Heart right ventricle (tissue), 16 donors: ENCODE measurements at regions of chr9 and their contacts with region 1.

Region 1: GRCh38 chr9:69131682-69132081 is 42.4 kb upstream of the TJP2 start:
- DNase-seq: peak in 1 of 2 donors; percentile 3
- ATAC-seq: peak; percentile 28 to 79 (median 40)
- H3K4me3 ChIP-seq: no peak overlapping the region
- H3K27ac ChIP-seq: peak overlapping the region in 9 of 10 donors; percentile 39 to 88 (median 76)
- H3K4me1 ChIP-seq: peaks cover 11 to 68% (median 35%) of the 10 kb centered on the region in 9 donors
- H3K27me3 ChIP-seq: no peaks in the 10 kb centered on the region
- CTCF ChIP-seq: no peak

Region 2: GRCh38 chr9:69078581-69078980 is 53.1 kb before region 1 on chr9:
- intact Hi-C with region 1: loop called in 2 of 10 experiments (anchors 5 to 10 kb)
- DNase-seq: peak in 1 of 2 donors; percentile 58
- ATAC-seq: peak; percentile 83 to 98 (median 93)
- H3K4me3 ChIP-seq: no peak overlapping the region
- H3K27ac ChIP-seq: peak overlapping the region; percentile 36 to 85 (median 72)
- H3K4me1 ChIP-seq: peaks cover 0 to 41% (median 21%) of the 10 kb centered on the region in 9 donors
- H3K27me3 ChIP-seq: no peaks in the 10 kb centered on the region
- CTCF ChIP-seq: no peak

Region 3: DNA sequence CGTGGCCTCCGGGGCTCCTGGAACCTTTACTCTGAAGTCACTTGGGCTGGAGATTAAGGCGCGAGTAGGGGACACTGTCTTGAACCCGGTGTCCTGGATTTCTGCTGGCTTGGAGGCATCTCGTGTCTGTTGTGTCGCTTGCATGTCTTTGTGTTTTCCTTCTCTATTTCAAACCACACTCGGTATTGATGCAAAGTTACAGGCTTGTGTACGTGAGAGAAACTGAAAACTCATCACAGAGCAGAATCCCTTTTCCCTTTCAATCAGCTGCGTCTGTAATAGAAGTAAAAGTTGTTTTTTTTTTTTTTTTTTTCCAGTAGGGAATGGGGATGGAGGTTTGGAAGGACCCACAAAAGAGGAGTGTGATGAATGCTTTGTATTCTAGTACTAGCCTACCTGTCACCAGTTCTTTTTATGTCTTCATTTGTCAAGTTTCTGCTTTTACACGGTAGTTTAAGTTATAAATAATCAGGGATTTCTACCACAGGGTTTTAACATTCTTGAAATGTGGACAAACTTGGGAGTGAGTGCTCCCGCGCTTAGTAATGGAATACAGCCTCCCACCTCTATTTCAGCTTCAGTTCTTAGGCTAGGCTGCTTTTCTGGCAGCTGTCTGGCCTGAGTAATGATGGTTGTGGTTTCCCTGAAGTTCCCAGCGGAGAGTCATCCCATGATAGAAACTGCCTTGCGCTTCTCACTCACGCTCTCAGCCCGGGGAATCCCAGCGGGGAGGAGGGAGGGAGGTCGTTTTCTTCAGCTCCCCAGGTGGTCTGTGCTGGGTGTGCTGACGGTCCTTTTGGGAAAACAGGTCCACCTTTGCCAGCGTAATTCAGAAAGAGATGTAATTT is 43.2 kb after region 1 on chr9:
- intact Hi-C with region 1: loop called in 2 of 10 experiments (anchors 5 kb)
- DNase-seq: peak in 1 of 2 donors; percentile 60
- ATAC-seq: peak; percentile 23 to 68 (median 60)
- H3K4me3 ChIP-seq: peak overlapping the region; percentile 69 to 88 (median 82)
- H3K27ac ChIP-seq: peak overlapping the region; percentile 82 to 94 (median 89)
- H3K4me1 ChIP-seq: peaks cover 3 to 86% (median 63%) of the 10 kb centered on the region in 9 donors
- H3K27me3 ChIP-seq: no peaks in the 10 kb centered on the region
- CTCF ChIP-seq: no peak